Lower leg skin (tissue), 4 donors: ENCODE measurements at regions of chr19 and their contacts with region 1.

Region 1: GRCh38 chr19:36398571-36398970 is 19.6 kb upstream of the ZFP14 start:
- DNase-seq: no peak
- H3K4me3 ChIP-seq: no peak overlapping the region
- CTCF ChIP-seq: no peak
- POLR2A ChIP-seq: no peak

Region 2: GRCh38 chr19:35790981-35791813 is 607.4 kb before region 1 on chr19:
- intact Hi-C with region 1: loop called (anchors 5 kb)
- DNase-seq: no peak
- H3K4me3 ChIP-seq: no peak overlapping the region
- CTCF ChIP-seq: no peak
- POLR2A ChIP-seq: no peak

Region 3: GRCh38 chr19:36687214-36688056 is 288.9 kb after region 1 on chr19 and contains the start of gene ZNF567:
- intact Hi-C with region 1: no loop called
- DNase-seq: peak; percentile 98 to 99
- H3K4me3 ChIP-seq: peak within 1 kb of the TSS; percentile 60
- CTCF ChIP-seq: no peak
- POLR2A ChIP-seq: peak in 1 of 2 donors; percentile 21
- total RNA-seq, gene ZNF567: 6.3 to 9.6 (median 7.7) TPM